ENCODE measurements at regions of chr12 and their contacts with region 1.

Region 1: DNA sequence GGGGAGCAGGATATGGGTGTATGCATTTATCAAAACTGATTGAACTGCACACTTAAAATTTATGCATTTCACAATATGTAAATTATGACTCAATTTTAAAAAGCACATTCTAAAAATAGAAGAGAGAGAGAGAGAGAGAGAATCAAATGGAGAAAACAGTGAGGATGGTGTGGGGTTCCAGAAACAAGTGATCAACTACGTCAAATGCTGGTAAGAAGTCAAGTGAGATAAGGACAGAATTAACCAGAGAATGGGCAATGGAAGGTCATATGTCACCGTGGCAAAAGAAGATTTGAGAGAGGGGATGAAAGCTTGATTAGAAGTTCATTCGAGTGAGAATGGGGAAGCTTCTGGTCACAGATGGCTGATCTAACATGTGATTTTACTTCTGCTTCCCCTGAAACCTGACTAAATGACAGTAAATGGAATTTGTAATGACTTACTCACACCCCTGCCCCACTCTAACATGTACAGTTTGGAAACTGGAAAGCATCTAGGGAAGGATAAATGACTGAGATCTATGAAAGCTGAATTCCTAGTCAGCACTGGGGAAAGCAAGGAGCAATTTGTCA is 276.5 kb upstream of the AMIGO2 start:
- DNase-seq: no peak
- H3K4me3 Mint-ChIP-seq: peak overlapping the region; percentile 60
- H3K27ac Mint-ChIP-seq: peak overlapping the region; percentile 97
- H3K4me1 Mint-ChIP-seq: peaks cover 73% of the 10 kb centered on the region
- H3K27me3 Mint-ChIP-seq: no peaks in the 10 kb centered on the region

Region 2: GRCh38 chr12:46209914-46210872 is 1146.0 kb before region 1 on chr12:
- intact Hi-C with region 1: loop called (anchors 10 kb)
- DNase-seq: peak; percentile 31
- H3K4me3 Mint-ChIP-seq: peak overlapping the region; percentile 52
- H3K27ac Mint-ChIP-seq: peak overlapping the region; percentile 96
- H3K4me1 Mint-ChIP-seq: peaks cover 64% of the 10 kb centered on the region
- H3K27me3 Mint-ChIP-seq: no peaks in the 10 kb centered on the region

Region 3: DNA sequence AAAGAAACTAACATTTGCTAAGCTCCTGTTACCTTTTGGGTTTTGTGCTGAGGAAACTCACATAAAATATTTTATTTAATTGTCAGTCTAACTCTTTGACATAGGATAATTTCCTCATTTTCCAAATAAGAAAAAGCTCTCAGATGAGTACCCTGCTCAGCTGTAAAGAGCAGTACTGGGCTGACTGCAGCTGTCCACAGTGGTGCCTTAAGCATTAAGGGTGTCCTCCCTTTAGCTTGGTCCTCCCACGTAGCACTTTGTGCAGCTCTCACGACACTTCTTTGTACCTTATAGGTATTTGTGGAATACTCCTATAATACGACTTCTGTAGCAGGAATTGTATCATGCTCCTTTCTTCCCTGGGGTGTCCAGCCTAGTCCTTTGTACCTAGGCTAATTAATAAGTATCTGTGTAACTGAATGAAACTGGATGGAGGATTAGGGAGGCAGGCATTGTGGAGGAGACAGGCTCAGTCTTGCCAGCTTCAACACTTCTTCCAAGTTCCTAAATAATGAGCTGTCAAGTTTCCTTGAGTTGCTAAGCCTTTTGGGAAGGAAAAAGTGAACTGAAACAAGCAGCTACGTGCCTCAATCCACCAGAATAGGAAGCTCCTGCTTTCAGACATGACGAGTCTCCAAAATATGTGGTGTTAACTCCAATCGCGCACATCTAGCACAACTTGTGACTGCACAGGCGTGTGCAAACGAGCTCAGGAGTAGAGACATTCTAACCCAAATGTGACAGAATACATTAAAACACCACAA is 653.5 kb before region 1 on chr12:
- intact Hi-C with region 1: no loop called
- DNase-seq: no peak
- H3K4me3 Mint-ChIP-seq: no peak overlapping the region
- H3K27ac Mint-ChIP-seq: no peak overlapping the region
- H3K4me1 Mint-ChIP-seq: no peaks in the 10 kb centered on the region
- H3K27me3 Mint-ChIP-seq: peaks cover 4% of the 10 kb centered on the region

Region 4: GRCh38 chr12:47085815-47086252 is 270.4 kb before region 1 on chr12:
- intact Hi-C with region 1: loop called (anchors 2 kb)
- DNase-seq: peak; percentile 38
- H3K4me3 Mint-ChIP-seq: no peak overlapping the region
- H3K27ac Mint-ChIP-seq: peak overlapping the region; percentile 53
- H3K4me1 Mint-ChIP-seq: peaks cover 53% of the 10 kb centered on the region
- H3K27me3 Mint-ChIP-seq: no peaks in the 10 kb centered on the region

Region 5: DNA sequence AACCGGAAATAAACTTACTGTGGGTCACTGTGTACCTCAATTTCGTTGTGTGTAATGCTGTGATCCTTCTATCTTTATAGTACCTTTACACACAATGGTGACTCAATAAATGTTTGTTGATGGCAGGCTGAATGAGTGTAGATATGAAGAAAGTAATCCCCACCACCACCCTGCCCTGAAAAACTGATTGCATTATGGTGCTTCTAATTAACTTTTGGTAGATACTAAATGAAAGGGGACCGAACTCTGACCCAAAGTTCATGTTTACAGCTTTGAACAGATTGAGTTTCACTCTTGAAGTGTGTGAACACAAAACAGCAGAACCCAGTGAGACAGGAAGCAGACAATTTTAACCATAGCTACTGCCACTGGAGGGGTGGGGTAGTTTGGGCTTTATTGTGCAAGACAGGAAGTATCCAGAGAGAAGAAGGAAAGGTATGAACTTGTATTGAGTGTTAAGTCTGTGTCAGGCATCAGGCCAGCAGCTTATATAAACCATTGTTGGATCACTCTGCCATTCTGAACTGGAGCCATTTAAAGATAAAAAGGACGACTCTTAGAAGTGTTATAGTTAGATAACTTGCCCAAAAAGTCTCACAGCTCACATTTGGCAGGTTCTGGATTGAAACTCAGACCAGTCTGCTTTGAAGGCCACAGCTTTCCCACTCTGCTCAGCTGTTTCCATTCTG is 79.5 kb before region 1 on chr12:
- intact Hi-C with region 1: loop called (anchors 2 kb)
- DNase-seq: peak; percentile 63
- H3K4me3 Mint-ChIP-seq: peak overlapping the region; percentile 46
- H3K27ac Mint-ChIP-seq: peak overlapping the region; percentile 88
- H3K4me1 Mint-ChIP-seq: peaks cover 66% of the 10 kb centered on the region
- H3K27me3 Mint-ChIP-seq: no peaks in the 10 kb centered on the region

Region 6: GRCh38 chr12:47317175-47317915 is 38.9 kb before region 1 on chr12:
- intact Hi-C with region 1: loop called (anchors 2 kb)
- DNase-seq: peak; percentile 25
- H3K4me3 Mint-ChIP-seq: peak overlapping the region; percentile 1
- H3K27ac Mint-ChIP-seq: peak overlapping the region; percentile 9
- H3K4me1 Mint-ChIP-seq: peaks cover 51% of the 10 kb centered on the region
- H3K27me3 Mint-ChIP-seq: no peaks in the 10 kb centered on the region

Region 7: DNA sequence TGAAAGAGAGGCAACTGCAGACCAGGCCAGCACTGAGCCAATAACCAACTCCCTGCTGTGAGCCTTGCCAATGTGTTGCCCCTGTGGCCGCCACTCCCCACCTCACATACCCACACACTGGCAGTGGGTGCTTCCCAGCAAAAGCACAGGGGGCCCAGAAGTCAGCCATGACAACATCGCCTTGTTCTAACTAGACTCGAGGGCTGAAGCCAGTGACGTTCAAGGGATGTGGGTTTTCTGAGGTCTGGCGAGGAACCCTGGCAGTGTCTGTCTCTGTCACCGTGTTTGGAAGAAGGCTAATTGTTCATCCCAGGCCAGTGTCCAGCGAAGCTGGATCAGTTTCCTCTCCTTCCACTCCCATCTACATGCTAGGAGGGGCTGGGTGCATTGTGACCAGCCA is 35.4 kb after region 1 on chr12:
- intact Hi-C with region 1: loop called (anchors 1 kb)
- DNase-seq: peak; percentile 44
- H3K4me3 Mint-ChIP-seq: peak overlapping the region; percentile 27
- H3K27ac Mint-ChIP-seq: peak overlapping the region; percentile 100
- H3K4me1 Mint-ChIP-seq: peaks cover 89% of the 10 kb centered on the region
- H3K27me3 Mint-ChIP-seq: no peaks in the 10 kb centered on the region

Region 8: DNA sequence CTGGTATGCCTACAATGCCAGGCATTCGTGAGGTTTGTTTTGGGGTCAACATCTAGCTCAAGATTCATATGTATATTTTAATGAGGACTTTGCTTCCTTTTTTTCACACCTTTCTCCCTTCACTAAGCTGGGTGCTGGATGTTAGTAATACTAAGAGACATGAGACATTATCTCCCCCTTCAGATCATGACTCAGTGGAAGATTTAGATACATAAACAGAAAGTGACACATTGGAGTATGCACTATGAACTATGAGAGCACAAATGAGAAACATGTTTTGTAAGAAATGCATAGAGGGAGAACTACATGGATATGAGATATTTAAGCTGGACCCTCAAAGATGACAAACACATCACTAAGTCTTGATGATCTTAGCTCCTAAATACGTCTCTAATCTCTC is 63.3 kb after region 1 on chr12:
- intact Hi-C with region 1: loop called (anchors 1 kb)
- DNase-seq: no peak
- H3K4me3 Mint-ChIP-seq: no peak overlapping the region
- H3K27ac Mint-ChIP-seq: peak overlapping the region; percentile 28
- H3K4me1 Mint-ChIP-seq: peaks cover 25% of the 10 kb centered on the region
- H3K27me3 Mint-ChIP-seq: no peaks in the 10 kb centered on the region

Measured in activated T-helper 1 cell treated with anti-CD3 and anti-CD28 coated beads, Interleukin-12 subunit alpha, Interleukin-12 subunit beta, Interleukin-2, Interleukin-4 antibody, amounts not matched to agents 30 ng/mL and 10 ng/mL and 1 ng/mL, durations not matched to agents 14 hours and 24 hours and 36 hours (primary cell).